PC-9 (cell line): ENCODE measurements at regions of chr7 and their contacts with region 1.

Region 1: GRCh38 chr7:120320218-120320961 is 47.4 kb downstream of the KCND2 start:
- DNase-seq: no peak
- H3K4me3 ChIP-seq: no peak overlapping the region
- H3K27ac ChIP-seq: no peak overlapping the region
- H3K4me1 ChIP-seq: no peaks in the 10 kb centered on the region
- H3K27me3 ChIP-seq: no peaks in the 10 kb centered on the region
- CTCF ChIP-seq: no peak

Region 2: GRCh38 chr7:119684763-119685162 is 635.6 kb before region 1 on chr7:
- CTCF ChIA-PET with region 1: no interaction called
- POLR2A ChIA-PET with region 1: no interaction called
- intact Hi-C with region 1: loop called (anchors 5 kb)
- DNase-seq: no peak
- H3K4me3 ChIP-seq: no peak overlapping the region
- H3K27ac ChIP-seq: no peak overlapping the region
- H3K4me1 ChIP-seq: no peaks in the 10 kb centered on the region
- H3K27me3 ChIP-seq: no peaks in the 10 kb centered on the region
- CTCF ChIP-seq: no peak